Colonic mucosa (tissue), 4 donors: ENCODE measurements at regions of chr3 and their contacts with region 1.

Region 1: GRCh38 chr3:68033867-68034266 is 379.5 kb upstream of the SUCLG2 start:
- DNase-seq: no peak
- H3K4me3 ChIP-seq: no peak overlapping the region
- H3K27ac ChIP-seq: no peak overlapping the region
- H3K4me1 ChIP-seq: no peaks in the 10 kb centered on the region
- H3K27me3 ChIP-seq: no peaks in the 10 kb centered on the region
- CTCF ChIP-seq: no peak

Region 2: DNA sequence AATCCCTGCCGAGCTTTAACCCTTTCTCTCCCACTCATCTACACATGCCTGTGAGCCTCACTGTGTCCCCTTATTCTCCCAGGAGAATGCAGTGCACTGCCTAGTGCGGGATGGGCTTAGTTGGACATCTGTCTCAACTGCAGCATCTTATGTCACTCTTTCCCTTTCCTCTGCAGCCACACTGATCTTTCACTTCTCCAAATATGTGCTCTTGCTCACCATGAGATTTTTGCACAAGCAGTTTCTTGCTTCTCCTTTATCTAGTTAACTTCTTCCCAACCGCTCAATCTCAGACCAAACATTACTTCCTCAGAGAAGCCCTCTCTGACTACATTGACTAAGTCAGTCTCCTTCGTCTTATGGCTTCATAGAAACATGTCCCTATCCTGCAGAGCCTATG is 743.4 kb before region 1 on chr3:
- intact Hi-C with region 1: no loop called
- DNase-seq: no peak
- H3K4me3 ChIP-seq: no peak overlapping the region
- H3K27ac ChIP-seq: no peak overlapping the region
- H3K4me1 ChIP-seq: no peaks in the 10 kb centered on the region
- H3K27me3 ChIP-seq: no peaks in the 10 kb centered on the region
- CTCF ChIP-seq: no peak

Region 3: DNA sequence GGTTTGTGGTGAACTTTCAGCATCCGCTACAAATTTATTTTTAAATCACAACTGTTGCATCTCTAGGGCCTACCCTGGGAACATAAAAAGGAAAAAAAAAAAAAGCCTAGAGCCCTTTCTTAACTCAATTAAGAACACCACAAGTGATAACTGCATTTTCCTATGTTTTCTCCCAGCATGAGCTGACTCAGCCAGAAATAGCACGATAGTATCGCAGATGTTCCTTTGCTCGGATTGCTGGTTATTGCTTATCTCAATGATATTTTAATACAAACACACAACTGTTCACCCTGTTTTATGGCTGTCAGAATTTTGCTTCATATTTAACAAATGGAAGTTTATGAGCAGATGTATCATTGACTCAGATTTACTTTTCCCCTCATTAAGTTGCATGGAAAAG is 127.6 kb before region 1 on chr3:
- intact Hi-C with region 1: no loop called
- DNase-seq: no peak
- H3K4me3 ChIP-seq: no peak overlapping the region
- H3K27ac ChIP-seq: no peak overlapping the region
- H3K4me1 ChIP-seq: no peaks in the 10 kb centered on the region
- H3K27me3 ChIP-seq: no peaks in the 10 kb centered on the region
- CTCF ChIP-seq: no peak

Region 4: GRCh38 chr3:68876112-68876713 is 842.3 kb after region 1 on chr3:
- intact Hi-C with region 1: loop called (anchors 10 kb)
- DNase-seq: peak; percentile 27
- H3K4me3 ChIP-seq: no peak overlapping the region
- H3K27ac ChIP-seq: no peak overlapping the region
- H3K4me1 ChIP-seq: no peaks in the 10 kb centered on the region
- H3K27me3 ChIP-seq: no peaks in the 10 kb centered on the region
- CTCF ChIP-seq: peak; percentile 88